ENCODE measurements at regions of chr11 and their contacts with region 1.

Region 1: GRCh38 chr11:66222358-66223149 is 45.9 kb upstream of the RAB1B start:
- DNase-seq: peak; percentile 86 to 88
- ATAC-seq: peak; percentile 97 to 98
- H3K4me3 ChIP-seq: no peak overlapping the region
- H3K27ac ChIP-seq: peak overlapping the region in 1 of 4 donors; percentile 36
- H3K4me1 ChIP-seq: no peaks in the 10 kb centered on the region
- H3K27me3 ChIP-seq: no peaks in the 10 kb centered on the region
- CTCF ChIP-seq: peak; percentile 98 to 99 (median 99)
- POLR2A ChIP-seq: no peak

Region 2: DNA sequence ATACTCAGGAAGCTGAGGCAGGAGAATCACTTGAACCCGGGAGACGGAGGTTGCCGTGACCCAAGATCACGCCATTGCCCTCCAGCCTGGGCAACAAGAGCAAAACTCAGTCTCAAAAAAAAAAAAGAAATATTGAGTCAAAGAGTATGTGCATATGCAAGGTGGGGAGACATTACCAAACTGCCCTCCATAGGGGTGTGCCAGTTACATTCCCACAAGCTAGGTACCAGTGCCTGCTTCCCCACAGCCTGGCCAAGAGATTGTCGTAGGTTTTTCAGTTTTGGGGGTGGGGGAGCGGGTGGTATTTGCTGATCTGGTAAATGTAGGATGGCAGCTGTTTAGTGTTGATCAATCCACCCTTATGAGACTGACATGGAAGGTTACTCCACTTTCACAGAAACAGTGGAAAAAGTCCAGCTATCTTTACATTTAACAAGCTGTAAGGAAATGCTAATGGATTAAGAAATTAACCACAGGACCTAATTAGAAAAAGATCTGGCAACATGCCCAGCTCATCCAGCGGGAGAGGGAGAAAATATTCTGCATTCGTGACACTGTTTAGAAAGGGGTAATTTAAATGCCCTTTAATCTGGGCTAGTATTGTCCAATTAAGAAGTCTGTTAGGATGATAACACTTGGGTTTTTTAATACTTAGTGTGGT is 63.1 kb before region 1 on chr11:
- in situ Hi-C with region 1: no loop called
- intact Hi-C with region 1: no loop called
- DNase-seq: no peak
- ATAC-seq: no peak
- H3K4me3 ChIP-seq: no peak overlapping the region
- H3K27ac ChIP-seq: no peak overlapping the region
- H3K4me1 ChIP-seq: peaks cover 3 to 7% of the 10 kb centered on the region in 2 donors
- H3K27me3 ChIP-seq: no peaks in the 10 kb centered on the region
- CTCF ChIP-seq: no peak
- POLR2A ChIP-seq: no peak

Region 3: GRCh38 chr11:66258473-66258893 is 35.9 kb after region 1 on chr11:
- in situ Hi-C with region 1: no loop called
- intact Hi-C with region 1: loop called (anchors 1 kb)
- DNase-seq: no peak
- ATAC-seq: no peak
- H3K4me3 ChIP-seq: peak overlapping the region; percentile 90 to 98 (median 92)
- H3K27ac ChIP-seq: peak overlapping the region; percentile 74 to 78 (median 76)
- H3K4me1 ChIP-seq: peaks cover 4 to 14% of the 10 kb centered on the region in 2 donors
- H3K27me3 ChIP-seq: no peaks in the 10 kb centered on the region
- CTCF ChIP-seq: peak in 2 of 5 experiments; percentile 32 to 36
- POLR2A ChIP-seq: no peak

Region 4: DNA sequence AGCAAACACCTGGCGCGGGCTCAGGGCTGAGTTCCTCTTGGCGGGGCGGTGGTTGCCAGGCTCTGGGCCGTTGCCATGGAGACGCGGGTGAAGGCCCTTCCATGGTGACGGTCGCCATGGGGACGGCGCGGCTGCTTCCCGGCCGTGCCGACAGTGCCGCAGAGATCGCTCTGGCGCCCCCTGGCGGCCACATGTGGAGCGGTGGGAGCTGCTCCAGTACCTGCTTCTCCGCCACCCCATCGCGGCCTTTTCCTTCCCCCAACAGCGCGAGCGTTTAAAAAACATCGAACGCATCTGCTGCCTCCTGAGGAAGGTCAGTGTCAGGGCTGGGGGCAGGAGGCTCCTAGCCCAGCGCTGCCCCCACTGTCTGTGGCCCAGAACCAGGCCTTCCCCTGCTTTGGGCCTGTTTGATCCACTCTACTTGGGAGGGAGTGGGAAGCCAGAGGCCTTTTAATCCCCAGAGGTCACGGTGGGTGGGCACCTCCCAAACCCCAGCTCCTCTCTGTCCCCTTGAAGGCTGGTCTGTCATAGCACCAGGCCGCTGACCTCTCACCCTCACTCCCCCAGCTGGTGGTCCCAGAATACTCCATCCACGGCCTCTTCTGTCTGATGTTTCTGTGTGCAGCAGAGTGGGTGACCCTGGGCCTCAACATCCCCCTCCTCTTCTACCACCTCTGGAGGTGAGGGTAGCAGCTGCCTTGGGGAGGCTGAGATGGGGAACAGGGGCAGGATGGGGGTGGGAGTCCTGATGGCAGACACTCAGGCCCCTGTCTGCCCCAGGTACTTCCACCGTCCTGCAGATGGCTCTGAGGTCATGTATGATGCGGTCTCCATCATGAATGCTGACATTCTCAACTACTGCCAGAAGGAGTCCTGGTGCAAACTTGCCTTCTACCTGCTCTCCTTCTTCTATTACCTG is 60.2 kb after region 1 on chr11:
- in situ Hi-C with region 1: loop called in 1 of 4 experiments (anchors 10 kb)
- intact Hi-C with region 1: loop called (anchors 1 kb)
- DNase-seq: peak; percentile 84 to 92
- ATAC-seq: peak; percentile 84 to 85
- H3K4me3 ChIP-seq: no peak overlapping the region
- H3K27ac ChIP-seq: no peak overlapping the region
- H3K4me1 ChIP-seq: peaks cover 10 to 20% of the 10 kb centered on the region in 2 donors
- H3K27me3 ChIP-seq: no peaks in the 10 kb centered on the region
- CTCF ChIP-seq: peak; percentile 95 to 99 (median 98)
- POLR2A ChIP-seq: no peak

Region 5: DNA sequence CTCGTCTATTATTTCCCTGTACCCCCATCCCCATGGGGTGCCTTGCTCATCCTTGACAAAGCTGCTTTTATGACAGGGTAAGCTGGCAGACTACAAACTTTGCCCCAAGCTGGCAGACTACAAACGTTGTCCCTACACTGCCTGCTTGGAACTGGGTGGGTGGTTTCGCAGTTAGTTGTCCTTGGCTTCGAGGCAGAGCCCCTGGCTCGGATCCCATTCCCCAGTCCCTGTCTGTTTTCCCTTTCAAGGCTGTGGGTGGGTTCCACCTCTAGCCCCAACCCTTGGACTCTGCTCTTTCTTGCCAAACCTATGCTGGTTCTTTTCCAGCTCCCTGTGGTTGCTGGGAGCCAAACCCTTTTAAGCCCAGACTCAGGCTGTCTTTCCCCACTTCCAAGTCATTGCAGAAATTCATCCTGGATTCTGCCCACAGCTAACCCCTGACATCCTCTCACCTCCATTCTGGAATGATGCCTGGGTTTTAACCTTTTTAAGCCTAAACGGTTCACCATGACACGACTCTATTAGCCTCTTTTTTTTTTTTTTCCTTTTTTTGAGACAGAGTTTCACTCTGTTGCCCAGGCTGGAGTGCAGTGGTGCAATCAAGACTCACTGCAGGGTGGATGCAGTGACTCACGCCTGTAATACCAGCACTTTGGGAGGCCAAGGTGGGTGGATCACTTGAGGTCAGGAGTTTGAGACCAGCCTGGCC is 384.7 kb after region 1 on chr11:
- in situ Hi-C with region 1: no loop called
- intact Hi-C with region 1: no loop called
- DNase-seq: peak in 1 of 2 donors; percentile 66
- ATAC-seq: peak; percentile 47 to 76
- H3K4me3 ChIP-seq: no peak overlapping the region
- H3K27ac ChIP-seq: peak overlapping the region; percentile 7 to 55 (median 44)
- H3K4me1 ChIP-seq: peaks cover 0 to 2% of the 10 kb centered on the region in 2 donors
- H3K27me3 ChIP-seq: no peaks in the 10 kb centered on the region
- CTCF ChIP-seq: no peak
- POLR2A ChIP-seq: no peak

Region 6: DNA sequence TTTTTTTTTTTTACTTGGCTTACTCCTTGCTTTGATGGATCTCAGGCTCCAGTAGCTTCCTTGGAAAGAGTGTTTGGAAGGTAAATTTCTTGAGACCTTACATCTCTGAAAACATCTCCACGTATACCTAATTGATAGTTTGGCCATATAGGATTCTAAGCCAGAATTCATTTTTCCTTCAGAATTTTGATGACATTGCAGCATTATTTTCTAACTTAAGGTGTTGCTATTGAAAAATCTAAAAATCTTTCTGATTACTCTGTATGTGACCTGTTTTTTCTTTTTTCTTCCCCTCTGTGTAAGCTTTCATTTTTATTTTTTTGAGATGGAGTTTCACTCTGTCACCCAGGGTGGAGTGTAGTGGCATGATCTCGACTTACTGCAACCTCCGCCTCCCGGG is 529.6 kb after region 1 on chr11:
- in situ Hi-C with region 1: no loop called
- intact Hi-C with region 1: no loop called
- DNase-seq: no peak
- ATAC-seq: no peak
- H3K4me3 ChIP-seq: no peak overlapping the region
- H3K27ac ChIP-seq: no peak overlapping the region
- H3K4me1 ChIP-seq: no peaks in the 10 kb centered on the region
- H3K27me3 ChIP-seq: peaks cover 0 to 3% (median 0%) of the 10 kb centered on the region in 3 donors
- CTCF ChIP-seq: no peak
- POLR2A ChIP-seq: no peak

Measured in gastrocnemius medialis (tissue), 4 donors.